Activated CD4-positive, alpha-beta T cell treated with anti-CD3 and anti-CD28 coated beads, Interleukin-2, amount 10 ng/mL, durations not matched to agents 24 days and 14 days (primary cell): ENCODE measurements at regions of chr20 and their contacts with region 1.

Region 1: DNA sequence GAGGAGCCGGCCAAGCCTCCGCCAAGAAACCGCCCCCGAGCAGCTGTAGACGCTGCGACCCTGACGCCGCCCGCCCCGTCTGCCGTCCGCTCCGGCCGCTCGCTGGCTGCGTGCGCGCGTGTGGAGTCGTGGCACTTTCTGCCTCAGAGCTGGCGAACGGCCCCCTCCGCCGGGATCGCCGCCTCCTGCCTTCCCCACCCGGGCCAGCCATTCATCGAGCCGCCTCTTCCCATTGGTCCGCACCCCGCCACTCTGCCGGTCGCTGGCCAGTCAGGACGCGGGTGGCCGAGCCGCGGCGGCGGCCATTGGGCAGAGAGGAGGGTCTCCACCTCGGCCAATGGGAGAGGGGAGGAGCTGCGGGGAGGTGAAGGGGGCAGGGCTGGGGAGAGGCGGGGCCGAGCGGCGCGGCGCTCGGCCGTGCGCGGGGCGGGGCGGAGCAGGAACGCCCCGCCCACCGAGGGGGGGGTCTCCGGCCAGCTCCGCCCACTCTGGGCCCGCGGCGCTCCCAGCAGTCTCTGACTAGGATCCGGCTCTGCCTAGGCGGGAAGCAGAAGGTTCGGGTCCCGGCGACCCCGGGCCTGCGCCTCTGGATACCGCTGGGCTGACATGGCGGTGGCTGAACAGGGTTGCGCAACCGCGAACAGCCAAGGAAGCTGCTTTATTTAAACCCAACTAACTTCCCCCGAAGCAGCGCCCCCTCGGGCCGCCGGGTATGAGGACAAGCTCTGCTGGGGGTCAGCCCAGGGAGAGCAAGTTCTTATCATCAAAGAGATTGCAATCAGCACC is at the start of gene RRBP1:
- DNase-seq: peak; percentile 99
- H3K4me3 Mint-ChIP-seq: peak within 1 kb of the TSS; percentile 90
- H3K27ac Mint-ChIP-seq: peak within 1 kb of the TSS; percentile 92
- H3K4me1 Mint-ChIP-seq: peaks cover 19% of the 10 kb centered on the region
- H3K27me3 Mint-ChIP-seq: peaks cover 39% of the 10 kb centered on the region
- total RNA-seq, gene RRBP1: 47.5 and 49.9 TPM in 2 replicates

Region 2: GRCh38 chr20:16729565-16730456 is 952.5 kb before region 1 on chr20 and contains the start of gene SNRPB2:
- intact Hi-C with region 1: loop called (anchors 10 kb)
- DNase-seq: peak; percentile 97
- H3K4me3 Mint-ChIP-seq: peak within 1 kb of the TSS; percentile 100
- H3K27ac Mint-ChIP-seq: peak within 1 kb of the TSS; percentile 100
- H3K4me1 Mint-ChIP-seq: peaks cover 49% of the 10 kb centered on the region
- H3K27me3 Mint-ChIP-seq: peaks cover 16% of the 10 kb centered on the region
- total RNA-seq, gene SNRPB2: 132 and 134 TPM in 2 replicates

Region 3: DNA sequence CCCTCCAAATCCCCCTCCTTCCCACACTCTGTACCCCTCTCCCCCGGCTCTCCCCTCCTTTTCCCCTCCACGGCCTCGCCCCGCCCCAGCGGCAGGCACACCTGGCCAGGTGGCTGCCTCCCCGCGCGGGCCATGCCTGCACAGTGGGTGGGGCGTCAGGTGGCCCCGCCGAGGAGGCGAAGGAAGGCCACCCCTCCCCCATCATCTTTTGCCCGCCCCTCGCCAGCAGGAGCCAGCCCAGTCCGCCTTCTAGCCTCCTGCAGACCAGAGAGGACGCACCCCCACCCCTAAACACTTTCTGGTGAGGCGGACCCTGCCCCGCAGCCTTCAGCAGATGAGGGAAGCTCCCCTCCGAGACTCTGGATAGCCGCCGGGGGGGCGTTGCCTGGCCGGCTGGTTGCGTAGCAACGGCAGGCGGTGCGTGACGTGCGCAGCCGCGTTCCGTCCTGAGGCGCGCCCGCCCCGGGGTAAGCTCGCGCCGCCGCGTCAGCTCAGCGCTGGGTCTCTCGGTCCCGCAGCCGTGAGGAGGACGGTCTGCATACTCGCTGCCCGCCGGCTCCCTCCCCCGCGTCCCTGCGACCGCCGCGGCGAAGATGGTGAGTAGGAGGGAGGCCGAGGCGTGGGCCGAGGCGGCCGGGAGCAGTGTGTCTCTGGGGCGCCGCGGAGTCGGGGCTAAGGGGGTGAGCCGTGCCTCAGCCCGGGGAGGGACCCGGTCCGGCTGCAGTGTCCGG is 112.5 kb before region 1 on chr20 and contains the start of gene DSTN:
- intact Hi-C with region 1: loop called (anchors 5 kb)
- DNase-seq: peak; percentile 97
- H3K4me3 Mint-ChIP-seq: peak within 1 kb of the TSS; percentile 94
- H3K27ac Mint-ChIP-seq: peak within 1 kb of the TSS; percentile 95
- H3K4me1 Mint-ChIP-seq: peaks cover 23% of the 10 kb centered on the region
- H3K27me3 Mint-ChIP-seq: peaks cover 9% of the 10 kb centered on the region
- total RNA-seq, gene DSTN: 58.6 and 65.6 TPM in 2 replicates

Region 4: GRCh38 chr20:17782768-17783167 is 100.5 kb after region 1 on chr20:
- intact Hi-C with region 1: no loop called
- DNase-seq: no peak
- H3K4me3 Mint-ChIP-seq: no peak overlapping the region
- H3K27ac Mint-ChIP-seq: no peak overlapping the region
- H3K4me1 Mint-ChIP-seq: no peaks in the 10 kb centered on the region
- H3K27me3 Mint-ChIP-seq: peaks cover 2% of the 10 kb centered on the region

Region 5: DNA sequence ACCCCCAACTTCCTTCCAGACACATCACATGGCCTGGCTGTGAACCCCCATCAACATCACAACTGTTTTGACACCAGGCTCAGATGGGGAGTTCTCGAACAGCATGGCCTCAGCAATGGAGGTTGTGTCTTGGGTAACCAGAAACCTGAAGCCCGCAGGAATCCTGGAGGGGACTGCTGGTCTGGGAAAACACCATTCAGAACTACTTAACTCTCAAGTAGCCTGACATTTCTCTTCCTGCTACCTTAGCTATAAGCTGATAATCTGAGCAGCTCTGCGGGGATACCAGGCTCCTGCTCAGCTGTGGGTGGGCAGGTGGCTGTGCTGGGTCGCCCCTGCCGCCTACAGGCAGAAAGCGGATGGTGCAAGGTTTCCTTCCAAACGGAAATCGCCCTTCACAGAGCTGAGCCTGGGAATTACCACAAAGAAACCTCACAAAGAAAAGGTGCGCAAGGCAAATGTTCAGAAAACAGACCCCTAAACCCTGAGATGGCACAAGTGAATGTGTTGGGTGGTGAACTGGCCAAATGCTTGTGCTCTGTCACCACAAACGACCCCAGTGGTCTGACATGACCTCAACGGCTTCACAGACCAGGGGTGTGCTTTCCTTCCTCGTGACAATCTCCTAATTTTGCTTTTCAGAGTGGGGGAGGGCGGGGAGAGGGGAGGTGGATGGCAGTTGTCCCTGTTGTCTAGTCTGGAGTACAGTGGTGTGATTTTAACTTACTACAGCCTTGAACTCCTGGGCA is 256.7 kb after region 1 on chr20:
- intact Hi-C with region 1: loop called (anchors 1 kb)
- DNase-seq: peak; percentile 85
- H3K4me3 Mint-ChIP-seq: no peak overlapping the region
- H3K27ac Mint-ChIP-seq: peak overlapping the region; percentile 51
- H3K4me1 Mint-ChIP-seq: peaks cover 25% of the 10 kb centered on the region
- H3K27me3 Mint-ChIP-seq: no peaks in the 10 kb centered on the region

Region 6: DNA sequence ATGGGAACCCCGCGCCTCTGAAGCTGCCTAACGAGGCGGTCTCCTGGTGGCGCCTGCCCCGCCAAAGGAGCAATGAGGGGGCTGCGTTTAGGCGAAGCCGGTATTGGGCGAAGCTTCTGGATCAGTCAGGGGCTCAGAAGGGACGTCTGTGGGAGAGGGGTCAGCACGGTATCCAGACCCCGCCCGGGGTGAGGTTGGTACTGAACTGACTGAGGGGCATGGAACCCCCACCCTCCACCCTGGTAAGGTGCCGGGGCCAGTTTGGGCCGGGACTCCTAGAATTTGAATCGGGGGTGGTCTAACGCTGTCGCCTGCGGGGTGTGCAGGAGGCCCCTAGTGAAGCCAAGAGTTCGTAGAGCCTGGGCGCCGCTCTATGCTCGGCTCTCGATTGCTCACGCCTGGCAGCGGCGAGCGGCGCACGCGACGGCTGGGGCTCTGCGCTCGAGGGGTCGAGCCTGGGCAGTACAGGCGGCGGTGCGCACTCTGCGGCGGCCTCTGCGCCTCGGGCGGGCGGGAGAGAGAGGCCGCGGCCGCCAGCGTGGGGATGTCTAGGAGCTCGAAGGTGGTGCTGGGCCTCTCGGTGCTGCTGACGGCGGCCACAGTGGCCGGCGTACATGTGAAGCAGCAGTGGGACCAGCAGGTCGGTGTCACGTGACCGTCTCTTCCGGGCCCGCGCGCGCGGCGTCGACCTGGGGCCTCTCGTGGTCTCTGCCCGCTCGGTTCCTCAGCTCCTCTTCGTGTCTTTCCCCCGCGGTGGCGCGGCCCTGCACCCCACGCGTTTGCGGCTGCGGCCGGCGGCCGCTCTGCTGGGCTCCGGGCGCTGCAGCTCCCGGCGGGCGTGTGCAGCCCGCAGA is 455.3 kb after region 1 on chr20 and contains the starts of genes KAT14 and PET117:
- intact Hi-C with region 1: loop called (anchors 5 kb)
- DNase-seq: peak; percentile 98
- H3K4me3 Mint-ChIP-seq: peak within 1 kb of the TSS; percentile 75
- H3K27ac Mint-ChIP-seq: peak within 1 kb of the TSS; percentile 89
- H3K4me1 Mint-ChIP-seq: peaks cover 26% of the 10 kb centered on the region
- H3K27me3 Mint-ChIP-seq: peaks cover 3% of the 10 kb centered on the region
- total RNA-seq, gene KAT14: 16.5 and 16.8 TPM in 2 replicates
- total RNA-seq, gene PET117: 18.5 and 19.5 TPM in 2 replicates

Region 7: DNA sequence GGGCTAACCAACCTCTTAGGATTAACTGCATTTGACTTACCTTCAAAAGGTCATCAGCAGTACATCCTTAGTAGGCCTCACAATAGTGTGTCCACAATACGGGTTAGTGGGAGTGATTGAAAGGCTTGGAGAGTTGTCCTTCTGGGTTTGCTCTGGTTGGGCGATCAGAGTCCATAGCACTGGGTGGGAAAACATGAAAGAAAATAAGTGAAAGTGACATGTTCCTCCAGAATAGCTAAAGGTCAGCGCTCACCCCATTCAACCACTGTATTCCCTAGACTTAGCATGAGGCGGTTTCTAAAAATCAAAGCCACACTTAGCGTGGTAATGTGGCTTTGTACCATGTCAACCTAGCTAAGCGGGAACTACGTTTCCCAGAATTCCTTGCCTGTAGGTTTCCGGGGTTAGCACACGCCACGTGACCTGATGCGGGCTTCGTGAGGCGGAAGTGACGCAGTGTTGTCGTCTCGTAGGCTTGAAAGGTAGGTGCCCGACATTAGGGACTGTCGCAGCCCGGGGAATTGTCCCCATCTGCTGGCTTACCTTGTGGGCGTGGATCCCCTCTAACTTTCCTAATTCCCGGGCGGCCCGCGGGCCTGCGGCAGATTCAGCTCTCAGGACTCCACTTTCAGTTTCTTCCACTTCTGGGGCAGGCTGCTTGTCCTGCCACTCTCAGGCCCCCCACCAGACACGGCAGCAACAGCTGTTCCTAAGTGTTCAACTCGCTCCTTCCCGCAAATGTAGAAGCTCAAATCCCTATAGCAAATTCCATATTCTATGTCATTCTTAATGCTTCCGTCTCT is 1111.5 kb after region 1 on chr20:
- intact Hi-C with region 1: loop called (anchors 5 kb)
- DNase-seq: peak; percentile 95
- H3K4me3 Mint-ChIP-seq: peak overlapping the region; percentile 93
- H3K27ac Mint-ChIP-seq: peak overlapping the region; percentile 92
- H3K4me1 Mint-ChIP-seq: peaks cover 6% of the 10 kb centered on the region
- H3K27me3 Mint-ChIP-seq: peaks cover 6% of the 10 kb centered on the region